K562 (cell line): ENCODE measurements at regions of chr14 and their contacts with region 1.

Region 1: GRCh38 chr14:104752735-104753531 is at the start of gene SIVA1:
- DNase-seq: peak; percentile 92 to 99 (median 94)
- ATAC-seq: peak; percentile 95
- H3K4me3 ChIP-seq: peak within 1 kb of the TSS; percentile 98
- H3K27ac ChIP-seq: peak within 1 kb of the TSS; percentile 99
- H3K4me1 ChIP-seq: peaks cover 9 to 44% of the 10 kb centered on the region in 2 experiments; a peak in 3 of 5 replicates
- H3K27me3 ChIP-seq: no peaks in the 10 kb centered on the region
- CTCF ChIP-seq: no peak
- EP300 ChIP-seq: no peak
- POLR2A ChIP-seq: peak; percentile 61
- RAD21 ChIP-seq: no peak
- polyA plus RNA-seq, gene SIVA1: 4.2 to 20.6 TPM

Region 2: GRCh38 chr14:104826189-104826860 is 73.4 kb after region 1 on chr14:
- CTCF ChIA-PET with region 1: no interaction called
- POLR2A ChIA-PET with region 1: interaction called, 7 read pairs
- in situ Hi-C with region 1: no loop called
- intact Hi-C with region 1: loop called (anchors 5 kb)
- DNase-seq: peak; percentile 83 to 87 (median 84)
- ATAC-seq: peak; percentile 90
- H3K4me3 ChIP-seq: peak overlapping the region; percentile 48
- H3K27ac ChIP-seq: no peak overlapping the region
- H3K4me1 ChIP-seq: peaks cover 6 to 36% of the 10 kb centered on the region in 2 experiments; a peak in 3 of 5 replicates
- H3K27me3 ChIP-seq: no peaks in the 10 kb centered on the region
- CTCF ChIP-seq: peak in 2 of 3 experiments; percentile 66 to 85; a peak in 4 of 6 replicates
- EP300 ChIP-seq: no peak
- POLR2A ChIP-seq: no peak
- RAD21 ChIP-seq: peak; percentile 54 to 62

Region 3: GRCh38 chr14:104970231-104971101 is 217.5 kb after region 1 on chr14:
- CTCF ChIA-PET with region 1: no interaction called
- POLR2A ChIA-PET with region 1: no interaction called
- in situ Hi-C with region 1: no loop called
- intact Hi-C with region 1: no loop called
- DNase-seq: peak in 3 of 4 experiments; percentile 34 to 39 (median 37)
- ATAC-seq: peak; percentile 71
- H3K4me3 ChIP-seq: no peak overlapping the region
- H3K27ac ChIP-seq: no peak overlapping the region
- H3K4me1 ChIP-seq: peaks cover 0 to 66% of the 10 kb centered on the region in 2 experiments; a peak in 3 of 5 replicates
- H3K27me3 ChIP-seq: peaks cover 0 to 27% of the 10 kb centered on the region in 2 experiments; a peak in 1 of 5 replicates
- CTCF ChIP-seq: no peak
- EP300 ChIP-seq: no peak
- POLR2A ChIP-seq: no peak
- RAD21 ChIP-seq: no peak